A673 (cell line): ENCODE measurements at regions of chr11 and their contacts with region 1.

Region 1: GRCh38 chr11:34044664-34045485 is 6.7 kb upstream of the CAPRIN1 start:
- DNase-seq: peak; percentile 99
- H3K4me3 ChIP-seq: peak overlapping the region; percentile 12
- H3K27ac ChIP-seq: peak overlapping the region; percentile 97
- H3K4me1 ChIP-seq: peaks cover 75% of the 10 kb centered on the region
- H3K27me3 ChIP-seq: no peaks in the 10 kb centered on the region
- CTCF ChIP-seq: no peak

Region 2: GRCh38 chr11:32255841-32256240 is 1789.0 kb before region 1 on chr11:
- CTCF ChIA-PET with region 1: no interaction called
- POLR2A ChIA-PET with region 1: no interaction called
- intact Hi-C with region 1: no loop called
- DNase-seq: no peak
- H3K4me3 ChIP-seq: no peak overlapping the region
- H3K27ac ChIP-seq: no peak overlapping the region
- H3K4me1 ChIP-seq: peaks cover 7% of the 10 kb centered on the region
- H3K27me3 ChIP-seq: peaks cover 36% of the 10 kb centered on the region
- CTCF ChIP-seq: no peak

Region 3: DNA sequence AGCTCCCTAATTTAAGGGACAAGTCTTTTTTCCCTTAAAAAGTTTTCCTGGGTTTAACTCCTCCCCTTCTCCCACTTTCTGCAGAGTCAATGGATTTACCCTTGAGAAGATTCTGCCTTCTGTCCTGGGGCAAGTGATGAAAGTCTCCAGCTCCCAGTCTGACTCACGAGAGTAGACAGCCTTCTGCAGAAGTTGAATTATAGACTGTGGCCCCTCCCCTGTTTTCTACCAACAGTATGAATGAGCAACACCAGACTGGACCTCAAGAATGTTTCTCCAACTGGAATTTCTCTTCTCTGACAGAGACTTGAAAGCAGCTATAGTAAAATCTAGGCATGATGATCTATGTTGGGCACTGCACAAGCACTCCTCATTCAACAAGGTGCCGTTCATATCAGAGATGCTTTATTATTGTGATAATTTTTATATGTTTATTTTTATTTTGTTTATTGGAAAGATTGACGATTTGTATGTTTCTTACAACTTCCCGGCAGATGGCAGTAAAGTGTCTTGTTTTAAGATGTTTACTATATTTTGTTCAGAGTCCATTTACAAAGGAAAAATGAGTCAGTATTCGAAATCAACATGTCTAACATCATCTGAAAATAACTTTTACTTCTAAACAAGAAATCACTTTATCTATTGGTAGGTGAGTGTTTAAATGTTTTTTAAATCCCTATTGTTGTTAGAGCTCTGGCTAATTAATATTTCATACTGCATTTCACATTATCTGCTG is 209.6 kb before region 1 on chr11:
- CTCF ChIA-PET with region 1: interaction called, 14 read pairs
- POLR2A ChIA-PET with region 1: no interaction called
- intact Hi-C with region 1: loop called (anchors 1 kb)
- DNase-seq: peak; percentile 89
- H3K4me3 ChIP-seq: peak overlapping the region; percentile 24
- H3K27ac ChIP-seq: peak overlapping the region; percentile 57
- H3K4me1 ChIP-seq: peaks cover 39% of the 10 kb centered on the region
- H3K27me3 ChIP-seq: no peaks in the 10 kb centered on the region
- CTCF ChIP-seq: peak; percentile 86

Region 4: DNA sequence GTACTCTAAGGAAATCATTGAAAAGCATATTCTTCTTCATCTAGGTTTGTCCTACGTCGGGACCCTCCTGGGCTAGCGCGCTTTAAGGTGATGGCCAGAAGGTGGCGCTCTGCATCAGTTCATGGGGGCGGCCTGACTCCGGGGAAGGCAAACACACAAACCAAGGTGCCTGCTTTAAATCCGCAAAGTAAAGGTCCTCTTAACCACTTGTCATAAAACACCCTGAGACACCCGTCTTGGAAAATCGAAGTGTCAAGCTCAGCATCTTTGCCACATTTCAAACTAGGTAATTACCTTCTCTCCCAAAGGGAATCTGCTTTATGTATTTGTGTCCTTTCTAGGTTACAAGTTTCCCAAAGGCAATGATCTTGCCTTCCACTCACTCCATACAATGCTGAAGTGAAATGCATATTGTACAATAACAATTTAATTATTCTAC is 186.9 kb before region 1 on chr11:
- CTCF ChIA-PET with region 1: no interaction called
- POLR2A ChIA-PET with region 1: no interaction called
- intact Hi-C with region 1: loop called (anchors 5 kb)
- DNase-seq: peak; percentile 97
- H3K4me3 ChIP-seq: no peak overlapping the region
- H3K27ac ChIP-seq: peak overlapping the region; percentile 24
- H3K4me1 ChIP-seq: peaks cover 65% of the 10 kb centered on the region
- H3K27me3 ChIP-seq: no peaks in the 10 kb centered on the region
- CTCF ChIP-seq: peak; percentile 100

Region 5: GRCh38 chr11:33996498-33997454 is 48.1 kb before region 1 on chr11:
- CTCF ChIA-PET with region 1: interaction called, 5 read pairs
- POLR2A ChIA-PET with region 1: interaction called, 7 read pairs
- intact Hi-C with region 1: loop called (anchors 1 kb)
- DNase-seq: peak; percentile 96
- H3K4me3 ChIP-seq: peak overlapping the region; percentile 17
- H3K27ac ChIP-seq: peak overlapping the region; percentile 69
- H3K4me1 ChIP-seq: peaks cover 46% of the 10 kb centered on the region
- H3K27me3 ChIP-seq: no peaks in the 10 kb centered on the region
- CTCF ChIP-seq: peak; percentile 100

Region 6: GRCh38 chr11:34034043-34034442 is 10.8 kb before region 1 on chr11:
- CTCF ChIA-PET with region 1: no interaction called
- POLR2A ChIA-PET with region 1: interaction called, 12 read pairs
- intact Hi-C with region 1: no loop called
- DNase-seq: no peak
- H3K4me3 ChIP-seq: no peak overlapping the region
- H3K27ac ChIP-seq: no peak overlapping the region
- H3K4me1 ChIP-seq: peaks cover 43% of the 10 kb centered on the region
- H3K27me3 ChIP-seq: no peaks in the 10 kb centered on the region
- CTCF ChIP-seq: no peak

Region 7: DNA sequence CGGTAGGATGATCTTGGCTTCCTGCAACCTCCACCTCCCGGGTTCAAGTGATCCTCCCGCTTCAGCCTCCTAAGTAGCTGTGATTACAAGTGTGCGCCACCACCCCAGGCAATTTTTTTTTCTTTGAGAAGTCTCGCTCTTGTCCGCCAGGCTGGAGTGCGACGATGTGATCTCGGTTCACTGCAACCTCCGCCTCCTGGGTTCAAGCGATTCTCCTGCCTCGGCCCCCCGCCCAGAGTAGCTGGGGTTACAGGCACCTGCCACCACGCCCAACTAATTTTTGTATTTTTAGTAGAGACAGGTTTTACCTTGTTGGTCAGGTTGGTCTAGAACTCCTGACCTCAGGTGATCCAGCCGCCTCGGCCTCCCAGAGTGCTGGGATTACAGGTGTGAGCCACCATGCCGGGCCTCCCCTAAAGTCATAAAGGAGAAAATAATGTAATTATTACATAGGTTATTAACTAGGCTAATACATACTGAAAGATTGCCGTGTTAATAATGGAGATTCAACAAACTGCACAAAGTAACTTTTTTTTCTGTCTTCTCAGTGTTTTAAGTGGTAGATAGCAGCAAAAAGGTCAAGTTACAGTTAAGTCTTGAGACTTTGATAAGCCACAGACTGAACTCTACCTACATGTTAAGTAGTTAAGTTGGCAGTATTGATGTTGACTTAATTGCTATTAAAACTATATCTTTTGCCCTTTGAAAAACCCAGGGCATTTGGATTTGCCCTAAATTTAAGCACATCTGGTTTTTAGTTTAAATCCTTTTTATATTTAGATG is 10.5 kb after region 1 on chr11:
- CTCF ChIA-PET with region 1: no interaction called
- POLR2A ChIA-PET with region 1: no interaction called
- intact Hi-C with region 1: no loop called
- DNase-seq: peak; percentile 60
- H3K4me3 ChIP-seq: peak overlapping the region; percentile 71
- H3K27ac ChIP-seq: peak overlapping the region; percentile 99
- H3K4me1 ChIP-seq: peaks cover 58% of the 10 kb centered on the region
- H3K27me3 ChIP-seq: no peaks in the 10 kb centered on the region
- CTCF ChIP-seq: no peak